ENCODE measurements at regions of chr11 and their contacts with region 1.

Region 1: GRCh38 chr11:94493281-94494125 is at the starts of genes ANKRD49 and MRE11:
- DNase-seq: peak; percentile 97
- H3K4me3 ChIP-seq: peak within 1 kb of the TSS; percentile 88
- H3K27ac ChIP-seq: peak within 1 kb of the TSS; percentile 58
- H3K4me1 ChIP-seq: peaks cover 25% of the 10 kb centered on the region
- CTCF ChIP-seq: no peak
- total RNA-seq, gene ANKRD49: 26.1 and 29.2 TPM in 2 replicates
- total RNA-seq, gene MRE11: 42.6 and 44.4 TPM in 2 replicates

Region 2: GRCh38 chr11:93791493-93791892 is 702.0 kb before region 1 on chr11:
- CTCF ChIA-PET with region 1: no interaction called
- POLR2A ChIA-PET with region 1: interaction called, 3 read pairs
- intact Hi-C with region 1: loop called (anchors 10 kb)
- DNase-seq: no peak
- H3K4me3 ChIP-seq: no peak overlapping the region
- H3K27ac ChIP-seq: no peak overlapping the region
- H3K4me1 ChIP-seq: peaks cover 12% of the 10 kb centered on the region
- CTCF ChIP-seq: no peak

Region 3: GRCh38 chr11:94376841-94377240 is 116.7 kb before region 1 on chr11:
- CTCF ChIA-PET with region 1: no interaction called
- POLR2A ChIA-PET with region 1: no interaction called
- intact Hi-C with region 1: no loop called
- DNase-seq: no peak
- H3K4me3 ChIP-seq: no peak overlapping the region
- H3K27ac ChIP-seq: no peak overlapping the region
- H3K4me1 ChIP-seq: no peaks in the 10 kb centered on the region
- CTCF ChIP-seq: no peak

Measured in OCI-LY7 (cell line).